Posterior cingulate gyrus (tissue), 11 donors: ENCODE measurements at regions of chr2 and their contacts with region 1.

Region 1: GRCh38 chr2:85750587-85751575 is 2.9 kb upstream of the ATOH8 start:
- DNase-seq: peak in 9 of 10 donors; percentile 57 to 97 (median 83)

Region 2: DNA sequence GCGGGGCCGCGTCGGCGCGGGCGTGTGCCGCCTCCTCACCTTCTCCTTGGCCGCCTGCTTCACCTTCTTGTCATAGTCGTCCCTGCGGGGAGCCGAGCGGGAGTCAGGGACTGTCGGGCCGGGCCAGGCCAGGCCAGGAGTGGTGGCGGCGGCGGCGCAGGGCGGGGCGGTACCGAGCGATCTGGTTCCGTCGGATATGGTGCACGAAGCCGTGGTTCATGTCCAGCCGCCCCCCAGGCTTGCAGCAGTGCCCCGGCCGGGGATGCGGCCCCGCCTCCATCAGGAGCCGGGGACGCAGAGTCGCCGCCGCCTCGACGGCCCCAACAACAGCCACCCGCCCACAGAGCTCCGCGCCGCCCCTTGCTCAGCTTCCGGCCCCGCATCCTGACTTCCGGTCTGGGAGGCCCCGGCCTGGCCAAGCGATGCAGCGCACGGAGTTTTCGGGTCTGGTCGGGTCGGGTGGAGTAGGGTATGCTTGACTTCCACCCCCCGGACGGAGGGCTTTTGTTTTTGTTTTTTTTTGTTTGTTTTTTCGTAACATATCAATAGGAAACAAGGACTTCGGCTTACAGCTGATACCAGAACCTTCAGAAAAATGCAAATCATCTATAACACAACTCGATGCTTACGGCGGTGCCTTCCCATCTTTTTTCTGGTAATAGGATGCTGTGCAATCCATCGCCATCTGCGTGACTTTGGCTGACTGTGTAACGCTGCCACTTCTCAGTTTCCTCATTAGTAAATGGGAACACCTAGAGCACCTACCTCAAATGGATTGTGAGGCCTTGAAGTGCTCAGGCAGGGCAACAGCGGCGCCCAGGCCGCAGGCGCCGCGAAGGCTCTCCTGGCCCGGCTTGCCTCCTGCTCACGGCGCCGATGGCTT is 138.9 kb before region 1 on chr2 and contains the start of gene C2orf68:
- intact Hi-C with region 1: no loop called
- DNase-seq: peak; percentile 80 to 98 (median 90)

Region 3: DNA sequence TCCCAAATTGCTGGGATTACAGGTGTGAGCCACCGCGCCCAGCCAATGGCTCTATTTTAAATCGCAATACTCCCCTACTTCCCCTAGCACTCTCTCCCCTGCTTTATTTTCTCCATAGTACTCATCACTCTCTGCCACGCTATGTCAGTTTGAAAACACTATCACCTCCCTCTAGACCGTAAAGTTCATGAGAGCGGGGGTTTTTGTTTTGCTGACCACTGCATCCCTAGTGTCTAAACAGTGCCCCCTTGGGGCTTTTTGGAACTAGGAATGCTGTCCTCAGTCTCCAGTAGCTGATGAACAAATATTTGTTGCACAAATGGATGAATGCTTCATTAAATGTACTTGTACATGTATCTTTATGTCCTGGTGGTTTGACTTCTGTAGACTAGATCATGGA is 47.0 kb after region 1 on chr2:
- intact Hi-C with region 1: loop called (anchors 1 kb)
- DNase-seq: peak in 4 of 10 donors; percentile 6 to 76 (median 50)